CD8-positive, alpha-beta T cell (primary cell): ENCODE measurements at regions of chr19 and their contacts with region 1.

Region 1: DNA sequence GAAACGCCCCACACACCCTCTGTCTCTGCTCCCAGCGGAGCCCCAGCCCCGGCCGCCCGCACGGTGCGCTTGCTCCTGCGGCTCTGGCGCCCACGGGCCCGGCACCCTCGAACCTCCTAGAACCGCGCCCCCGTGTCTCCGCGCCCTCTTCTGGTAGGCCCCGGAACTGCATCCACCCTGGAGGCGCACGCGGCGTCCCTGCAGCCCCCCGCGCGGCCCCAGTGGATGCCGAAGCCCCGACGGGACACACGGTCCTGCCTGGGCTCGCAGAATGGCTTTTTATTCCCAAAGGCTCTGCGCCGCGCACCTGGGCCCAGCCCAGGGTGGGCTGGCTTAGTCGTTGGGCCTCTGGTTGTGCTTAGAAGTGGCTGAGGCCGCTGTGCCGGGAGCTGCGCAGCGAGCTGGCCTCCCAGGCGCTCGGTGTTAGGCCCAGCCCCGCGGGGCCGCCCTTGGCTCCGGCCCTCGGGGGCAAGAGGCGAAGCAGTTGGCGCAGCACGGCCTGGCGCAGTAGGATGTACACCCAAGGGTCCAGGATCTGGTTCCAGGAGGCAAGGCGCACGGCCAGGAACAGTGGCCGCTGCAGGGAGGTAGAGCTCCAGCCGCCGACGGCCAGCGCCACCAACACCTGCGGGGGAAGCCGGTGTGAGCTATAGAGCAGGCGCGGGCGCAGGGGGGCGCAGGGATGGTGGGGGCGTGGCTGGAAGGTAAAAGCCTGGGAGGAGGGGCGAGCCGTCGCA is 2.8 kb downstream of the PTGER1 start:
- DNase-seq: peak; percentile 81 to 94 (median 87)
- ATAC-seq: peak; percentile 81
- H3K4me3 ChIP-seq: peak overlapping the region; percentile 8 to 40
- H3K4me3 Mint-ChIP-seq: peak overlapping the region; percentile 62
- H3K27ac ChIP-seq: no peak overlapping the region
- H3K27ac Mint-ChIP-seq: no peak overlapping the region
- H3K4me1 ChIP-seq: peaks cover 33% of the 10 kb centered on the region
- H3K4me1 Mint-ChIP-seq: peaks cover 33% of the 10 kb centered on the region
- H3K27me3 ChIP-seq: peaks cover 13 to 21% of the 10 kb centered on the region in 2 experiments
- H3K27me3 Mint-ChIP-seq: peaks cover 18% of the 10 kb centered on the region
- CTCF ChIP-seq: peak; percentile 99

Region 2: DNA sequence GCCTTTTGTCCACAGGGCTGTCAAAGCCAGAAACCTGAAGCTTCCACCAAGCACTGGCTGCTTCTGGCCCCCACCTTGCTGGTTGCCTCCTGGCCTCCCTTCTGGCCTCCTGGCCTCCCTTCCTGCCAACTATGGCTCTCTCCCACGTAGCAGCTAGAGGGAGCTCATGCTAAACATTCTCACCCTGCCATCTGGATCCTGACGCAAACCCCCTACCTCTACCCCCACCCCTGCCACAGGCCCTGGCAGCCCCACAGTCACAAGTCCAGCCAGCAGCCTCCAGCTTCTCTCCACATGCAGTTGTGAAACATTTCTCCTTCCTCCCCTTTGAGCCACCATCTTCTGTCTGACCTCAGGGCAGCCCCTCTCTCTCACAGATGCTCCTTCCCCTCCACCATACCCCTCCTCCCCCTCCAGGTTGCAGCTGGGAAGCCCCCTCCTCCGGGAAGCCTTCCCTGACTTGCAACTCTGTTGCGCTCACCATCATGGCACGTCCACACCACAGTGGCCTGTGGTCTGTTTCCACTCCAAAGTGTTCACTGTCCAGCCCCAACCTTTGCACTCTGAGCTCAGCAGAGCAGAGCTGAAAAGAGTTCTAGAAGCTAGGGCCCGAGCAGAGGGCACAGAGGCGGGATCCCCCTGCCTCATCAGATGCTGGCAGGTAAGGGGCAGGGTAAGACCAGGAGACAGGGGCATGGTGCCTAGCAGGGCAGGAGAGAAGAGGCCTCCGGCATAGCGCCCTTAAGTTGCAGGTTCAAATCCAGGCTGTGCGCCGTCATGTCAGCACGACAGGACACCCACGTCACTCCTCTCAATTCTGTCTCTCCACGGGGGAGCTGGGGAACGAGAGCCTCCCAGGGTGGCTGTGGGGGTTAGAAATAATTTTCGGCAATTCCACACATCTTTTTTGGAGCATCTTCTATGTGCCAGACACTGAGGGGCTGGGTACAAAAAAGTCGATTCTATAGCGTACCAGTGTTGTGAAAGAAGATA is 273.7 kb before region 1 on chr19:
- CTCF ChIA-PET with region 1: no interaction called
- POLR2A ChIA-PET with region 1: no interaction called
- intact Hi-C with region 1: loop called in 1 of 2 experiments (anchors 10 kb)
- DNase-seq: no peak
- ATAC-seq: no peak
- H3K4me3 ChIP-seq: no peak overlapping the region
- H3K4me3 Mint-ChIP-seq: no peak overlapping the region
- H3K27ac ChIP-seq: no peak overlapping the region
- H3K27ac Mint-ChIP-seq: no peak overlapping the region
- H3K4me1 ChIP-seq: no peaks in the 10 kb centered on the region
- H3K4me1 Mint-ChIP-seq: peaks cover 30% of the 10 kb centered on the region
- H3K27me3 ChIP-seq: no peaks in the 10 kb centered on the region
- H3K27me3 Mint-ChIP-seq: no peaks in the 10 kb centered on the region
- CTCF ChIP-seq: no peak

Region 3: GRCh38 chr19:14432791-14433553 is 39.4 kb before region 1 on chr19 and contains the start of gene PKN1:
- CTCF ChIA-PET with region 1: interaction called, 39 read pairs
- POLR2A ChIA-PET with region 1: interaction called, 5 read pairs
- intact Hi-C with region 1: loop called (anchors 1 kb)
- DNase-seq: peak in 7 of 9 experiments; percentile 39 to 72 (median 52)
- ATAC-seq: peak; percentile 18
- H3K4me3 ChIP-seq: peak within 1 kb of the TSS; percentile 83 to 85
- H3K4me3 Mint-ChIP-seq: peak within 1 kb of the TSS; percentile 89
- H3K27ac ChIP-seq: peak within 1 kb of the TSS; percentile 68 to 85
- H3K27ac Mint-ChIP-seq: peak within 1 kb of the TSS; percentile 90
- H3K4me1 ChIP-seq: peaks cover 43% of the 10 kb centered on the region
- H3K4me1 Mint-ChIP-seq: peaks cover 39% of the 10 kb centered on the region
- H3K27me3 ChIP-seq: no peaks in the 10 kb centered on the region
- H3K27me3 Mint-ChIP-seq: no peaks in the 10 kb centered on the region
- CTCF ChIP-seq: no peak
- total RNA-seq, gene PKN1: 152 to 158 TPM

Region 4: DNA sequence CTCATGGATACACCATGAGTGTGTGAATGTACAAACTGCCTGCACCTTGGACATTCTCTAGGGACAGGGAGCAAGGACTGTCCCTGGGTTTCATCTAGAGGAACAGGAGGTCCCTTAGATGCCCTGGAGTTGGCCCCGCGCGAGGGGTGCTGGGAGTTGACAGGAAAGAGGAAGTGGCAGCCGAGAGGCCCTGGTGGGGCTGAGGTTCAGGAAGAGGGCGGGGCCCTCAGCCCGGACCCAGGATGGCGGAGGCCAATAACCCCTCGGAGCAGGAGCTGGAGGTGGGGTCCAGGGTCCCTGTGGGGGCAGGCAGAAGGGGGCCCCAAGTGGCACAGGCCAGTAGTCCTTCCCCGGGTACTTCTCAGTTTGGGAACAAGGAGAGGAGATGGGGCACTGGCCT is 32.3 kb before region 1 on chr19:
- CTCF ChIA-PET with region 1: interaction called, 13 read pairs
- POLR2A ChIA-PET with region 1: interaction called, 4 read pairs
- intact Hi-C with region 1: no loop called
- DNase-seq: peak; percentile 55 to 90 (median 79)
- ATAC-seq: peak; percentile 99
- H3K4me3 ChIP-seq: peak overlapping the region; percentile 73 to 84
- H3K4me3 Mint-ChIP-seq: peak overlapping the region; percentile 93
- H3K27ac ChIP-seq: peak overlapping the region; percentile 80 to 84
- H3K27ac Mint-ChIP-seq: peak overlapping the region; percentile 93
- H3K4me1 ChIP-seq: peaks cover 55% of the 10 kb centered on the region
- H3K4me1 Mint-ChIP-seq: peaks cover 55% of the 10 kb centered on the region
- H3K27me3 ChIP-seq: no peaks in the 10 kb centered on the region
- H3K27me3 Mint-ChIP-seq: no peaks in the 10 kb centered on the region
- CTCF ChIP-seq: no peak

Region 5: GRCh38 chr19:14616407-14616806 is 144.0 kb after region 1 on chr19:
- CTCF ChIA-PET with region 1: no interaction called
- POLR2A ChIA-PET with region 1: no interaction called
- intact Hi-C with region 1: no loop called
- DNase-seq: no peak
- ATAC-seq: no peak
- H3K4me3 ChIP-seq: no peak overlapping the region
- H3K4me3 Mint-ChIP-seq: no peak overlapping the region
- H3K27ac ChIP-seq: no peak overlapping the region
- H3K27ac Mint-ChIP-seq: no peak overlapping the region
- H3K4me1 ChIP-seq: no peaks in the 10 kb centered on the region
- H3K4me1 Mint-ChIP-seq: no peaks in the 10 kb centered on the region
- H3K27me3 ChIP-seq: peaks cover 0 to 3% of the 10 kb centered on the region in 2 experiments
- H3K27me3 Mint-ChIP-seq: peaks cover 9% of the 10 kb centered on the region
- CTCF ChIP-seq: no peak